Activated T-helper 2 cell treated with anti-CD3 and anti-CD28 coated beads, Interferon-gamma antibody, Interleukin-2, Interleukin-4, amounts not matched to agents 10 μg/mL and 5 μg/mL and 100 μg/mL, durations not matched to agents 14 hours and 24 hours and 36 hours (primary cell): ENCODE measurements at regions of chr2 and their contacts with region 1.

Region 1: GRCh38 chr2:55617175-55618024 is at the start of gene PPP4R3B:
- DNase-seq: peak; percentile 99
- H3K4me3 Mint-ChIP-seq: no peak within 1 kb of the TSS
- H3K27ac Mint-ChIP-seq: no peak within 1 kb of the TSS
- H3K4me1 Mint-ChIP-seq: peaks cover 25% of the 10 kb centered on the region
- H3K27me3 Mint-ChIP-seq: no peaks in the 10 kb centered on the region
- total RNA-seq, gene PPP4R3B: 69.7 and 69.9 TPM in 2 replicates

Region 2: GRCh38 chr2:53786705-53787612 is 1830.4 kb before region 1 on chr2 and contains the starts of genes ASB3 and ERLEC1:
- intact Hi-C with region 1: loop called (anchors 10 kb)
- DNase-seq: peak; percentile 87
- H3K4me3 Mint-ChIP-seq: peak within 1 kb of the TSS; percentile 99
- H3K27ac Mint-ChIP-seq: peak within 1 kb of the TSS; percentile 97
- H3K4me1 Mint-ChIP-seq: peaks cover 38% of the 10 kb centered on the region
- H3K27me3 Mint-ChIP-seq: no peaks in the 10 kb centered on the region
- total RNA-seq, gene ASB3: 24.3 and 26.4 TPM in 2 replicates
- total RNA-seq, gene ERLEC1: 36.0 and 36.2 TPM in 2 replicates

Region 3: DNA sequence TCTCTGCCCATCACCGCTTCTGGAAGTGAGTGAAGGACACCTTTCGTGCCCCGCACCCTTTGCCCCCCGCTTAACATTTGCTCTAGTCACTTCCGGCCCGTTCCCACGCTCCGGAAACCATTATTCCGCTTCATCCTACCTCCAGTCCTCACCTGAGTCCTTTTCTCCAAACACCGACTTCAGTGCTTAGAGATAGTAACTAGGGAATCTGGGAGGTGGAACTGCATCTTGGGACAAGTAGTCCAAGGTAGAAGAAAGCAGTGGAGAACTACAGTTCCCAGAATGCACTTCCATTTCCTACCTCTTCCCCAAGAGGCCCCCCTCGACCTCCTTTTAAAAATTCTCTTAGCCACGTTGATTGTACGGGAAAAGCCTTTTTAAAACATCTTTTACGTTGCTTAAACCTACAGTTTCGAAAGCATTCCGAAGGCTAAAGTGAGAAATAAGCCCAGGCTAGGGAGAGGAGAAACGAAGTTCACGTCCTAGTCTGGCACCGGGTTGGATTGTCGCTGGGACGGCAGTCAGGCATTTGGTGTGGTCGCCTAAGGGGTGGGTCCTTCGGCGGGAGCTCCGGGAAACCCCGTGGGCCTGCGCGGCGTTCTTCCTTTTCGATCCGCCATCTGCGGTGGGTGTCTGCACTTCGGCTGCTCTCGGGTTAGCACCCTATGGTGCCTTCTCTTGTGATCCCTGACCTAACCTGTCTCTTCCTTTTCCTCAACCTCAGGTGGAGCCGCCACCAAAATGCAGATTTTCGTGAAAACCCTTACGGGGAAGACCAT is 385.1 kb before region 1 on chr2 and contains the starts of genes CLHC1 and RPS27A:
- intact Hi-C with region 1: loop called (anchors 1 kb)
- DNase-seq: peak; percentile 89
- H3K4me3 Mint-ChIP-seq: peak within 1 kb of the TSS; percentile 99
- H3K27ac Mint-ChIP-seq: peak within 1 kb of the TSS; percentile 95
- H3K4me1 Mint-ChIP-seq: peaks cover 43% of the 10 kb centered on the region
- H3K27me3 Mint-ChIP-seq: no peaks in the 10 kb centered on the region
- total RNA-seq, gene CLHC1: 12.0 and 12.3 TPM in 2 replicates
- total RNA-seq, gene RPS27A: 1,030 and 1,063 TPM in 2 replicates

Region 4: DNA sequence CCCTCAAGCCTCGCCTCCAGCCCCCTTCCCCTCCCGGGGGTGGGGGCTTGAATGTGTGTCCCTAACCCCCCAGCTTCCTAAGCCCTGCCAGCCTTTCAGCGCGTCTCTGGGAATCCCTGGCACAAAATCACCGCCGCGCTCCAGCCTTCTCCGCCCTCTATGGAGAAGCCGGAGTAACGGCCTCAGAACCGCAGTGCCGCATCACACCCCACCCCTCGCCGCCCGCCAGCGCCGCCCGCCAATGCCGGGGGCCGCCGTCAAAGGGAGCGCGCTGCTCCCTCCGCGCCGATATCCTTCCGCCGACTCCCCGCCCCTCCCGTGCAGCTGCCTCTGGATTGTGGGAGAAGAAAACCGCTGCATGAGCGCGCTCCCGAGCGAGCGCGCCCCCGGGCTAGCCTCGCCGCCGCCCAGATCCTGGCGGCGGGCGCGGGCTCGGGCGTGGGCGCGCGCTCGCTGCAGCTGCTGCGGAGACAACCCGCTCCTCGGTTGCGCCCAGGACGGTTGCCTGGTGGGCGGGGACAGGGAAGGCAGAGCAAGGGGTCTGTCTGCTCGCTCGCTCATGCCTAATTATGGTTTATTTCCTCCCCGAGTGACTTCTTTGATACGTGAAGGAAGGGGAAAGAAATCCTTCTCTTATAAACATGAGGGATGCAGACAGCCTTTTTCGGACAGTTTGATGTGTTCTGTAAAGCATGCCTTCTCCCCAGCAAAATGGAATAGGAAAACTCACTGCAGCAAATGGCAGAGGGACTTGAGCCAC is 197.5 kb before region 1 on chr2 and contains the start of gene CCDC88A:
- intact Hi-C with region 1: loop called (anchors 2 kb)
- DNase-seq: peak; percentile 86
- H3K4me3 Mint-ChIP-seq: peak within 1 kb of the TSS; percentile 91
- H3K27ac Mint-ChIP-seq: peak within 1 kb of the TSS; percentile 69
- H3K4me1 Mint-ChIP-seq: peaks cover 27% of the 10 kb centered on the region
- H3K27me3 Mint-ChIP-seq: peaks cover 29% of the 10 kb centered on the region
- total RNA-seq, gene CCDC88A: 19.0 and 19.8 TPM in 2 replicates

Region 5: DNA sequence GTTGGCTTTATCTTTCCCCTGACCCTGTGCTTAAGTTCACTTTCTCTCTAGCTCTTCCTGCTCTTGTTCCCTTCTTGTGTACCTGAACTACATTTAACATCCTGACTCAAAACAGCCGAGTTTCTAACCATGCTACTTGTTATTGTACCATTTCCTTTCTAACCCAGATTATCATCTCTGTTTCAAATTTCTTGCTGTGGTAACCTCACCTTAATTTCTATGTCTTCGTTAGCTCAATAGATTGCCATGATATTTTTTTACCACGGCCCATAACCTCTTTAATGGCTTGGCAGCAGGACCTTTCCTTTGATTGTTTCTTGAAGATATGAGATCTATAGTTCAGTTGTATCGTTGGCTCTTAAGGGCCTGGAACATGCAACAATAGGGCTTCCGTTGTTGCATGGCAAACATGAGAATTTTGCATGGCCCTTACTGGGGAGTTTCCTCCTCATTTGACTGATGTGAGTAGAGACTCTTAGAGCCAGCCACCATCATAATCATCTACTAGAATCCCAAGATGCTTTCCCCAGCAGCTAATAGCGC is 86.8 kb before region 1 on chr2:
- intact Hi-C with region 1: loop called (anchors 5 kb)
- DNase-seq: peak; percentile 24
- H3K4me3 Mint-ChIP-seq: peak overlapping the region; percentile 20
- H3K27ac Mint-ChIP-seq: peak overlapping the region; percentile 92
- H3K4me1 Mint-ChIP-seq: peaks cover 19% of the 10 kb centered on the region
- H3K27me3 Mint-ChIP-seq: no peaks in the 10 kb centered on the region

Region 6: DNA sequence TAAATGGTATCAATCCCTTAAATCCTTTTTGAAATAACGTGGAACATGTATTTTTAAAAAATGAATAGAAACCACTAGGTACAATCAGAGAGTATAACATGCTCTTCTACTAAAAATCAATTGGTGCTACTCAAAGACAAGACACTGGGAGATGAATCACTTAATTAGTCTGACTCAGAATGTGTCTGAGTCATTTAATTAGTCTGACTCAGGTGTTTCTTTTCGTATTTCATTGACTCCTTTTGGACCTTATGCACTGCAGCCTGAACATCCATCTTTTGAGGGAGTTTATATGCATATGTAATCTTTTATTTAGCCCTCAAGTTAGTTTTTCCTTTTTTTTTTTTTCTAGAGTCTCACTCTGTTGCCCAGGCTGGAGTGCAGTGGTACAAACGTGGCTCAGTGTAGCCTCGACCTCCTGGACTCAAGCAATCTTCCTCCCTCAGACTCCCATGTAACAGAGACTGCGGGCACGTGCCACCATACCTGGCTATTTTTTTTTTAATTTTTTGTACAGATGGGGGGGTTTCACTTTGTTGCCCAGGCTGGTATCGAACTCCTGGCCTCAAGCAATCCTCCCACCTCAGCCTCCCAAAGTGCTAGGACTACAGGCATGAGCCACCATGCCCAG is 26.5 kb before region 1 on chr2:
- intact Hi-C with region 1: loop called (anchors 1 kb)
- DNase-seq: no peak
- H3K4me3 Mint-ChIP-seq: no peak overlapping the region
- H3K27ac Mint-ChIP-seq: peak overlapping the region; percentile 67
- H3K4me1 Mint-ChIP-seq: peaks cover 18% of the 10 kb centered on the region
- H3K27me3 Mint-ChIP-seq: no peaks in the 10 kb centered on the region